ENCODE measurements at regions of chr6 and their contacts with region 1.

Region 1: GRCh38 chr6:24720604-24721460 is 1.9 kb upstream of the C6orf62 start:
- DNase-seq: peak; percentile 100
- ATAC-seq: peak; percentile 97
- H3K4me3 ChIP-seq: peak overlapping the region; percentile 85 to 92
- H3K27ac ChIP-seq: peak overlapping the region; percentile 93 to 96
- H3K4me1 ChIP-seq: no peaks in the 10 kb centered on the region
- H3K27me3 ChIP-seq: peaks cover 0 to 1% of the 10 kb centered on the region in 2 donors

Region 2: DNA sequence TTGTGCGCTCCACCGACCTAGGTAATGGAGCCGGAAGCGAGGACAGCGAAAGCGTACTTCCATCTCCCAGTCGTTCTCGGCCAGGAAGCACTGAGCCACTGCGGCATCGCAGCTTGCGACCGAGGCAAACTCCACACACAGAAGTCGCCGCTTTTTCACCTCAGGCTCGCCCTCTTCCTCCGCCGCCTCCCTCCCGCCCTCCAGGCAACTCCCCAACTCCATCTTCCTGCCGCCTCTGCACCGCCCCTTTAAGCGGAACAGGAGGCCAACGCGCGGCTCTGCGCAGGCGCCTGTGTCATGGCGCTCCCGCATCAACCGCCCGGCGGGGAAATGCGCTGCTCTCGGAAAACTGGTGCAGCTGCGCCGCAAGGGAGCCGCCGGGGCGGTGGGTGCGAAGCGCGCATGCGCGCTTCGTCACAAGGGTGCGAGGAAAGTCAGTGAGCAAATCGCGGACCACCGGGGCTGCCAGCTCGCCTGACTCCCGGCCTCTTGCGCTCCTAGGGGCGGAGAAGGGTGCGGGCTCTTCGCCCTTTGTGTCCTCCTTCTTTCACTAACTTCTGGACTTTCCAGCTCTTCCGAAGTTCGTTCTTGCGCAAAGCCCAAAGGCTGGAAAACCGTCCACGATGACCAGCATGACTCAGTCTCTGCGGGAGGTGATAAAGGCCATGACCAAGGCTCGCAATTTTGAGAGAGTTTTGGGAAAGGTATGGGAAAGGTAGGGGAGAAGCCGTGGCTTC is 54.0 kb before region 1 on chr6 and contains the starts of genes ACOT13 and TDP2:
- intact Hi-C with region 1: loop called in 1 of 2 experiments (anchors 2 kb)
- DNase-seq: peak; percentile 98
- ATAC-seq: peak; percentile 100
- H3K4me3 ChIP-seq: peak within 1 kb of the TSS; percentile 73 to 85
- H3K27ac ChIP-seq: peak within 1 kb of the TSS; percentile 52 to 69
- H3K4me1 ChIP-seq: peaks cover 0 to 4% of the 10 kb centered on the region in 2 donors
- H3K27me3 ChIP-seq: no peaks in the 10 kb centered on the region
- total RNA-seq, gene ACOT13: 8.9 to 10.4 TPM
- total RNA-seq, gene TDP2: 30.7 to 35.7 TPM

Region 3: DNA sequence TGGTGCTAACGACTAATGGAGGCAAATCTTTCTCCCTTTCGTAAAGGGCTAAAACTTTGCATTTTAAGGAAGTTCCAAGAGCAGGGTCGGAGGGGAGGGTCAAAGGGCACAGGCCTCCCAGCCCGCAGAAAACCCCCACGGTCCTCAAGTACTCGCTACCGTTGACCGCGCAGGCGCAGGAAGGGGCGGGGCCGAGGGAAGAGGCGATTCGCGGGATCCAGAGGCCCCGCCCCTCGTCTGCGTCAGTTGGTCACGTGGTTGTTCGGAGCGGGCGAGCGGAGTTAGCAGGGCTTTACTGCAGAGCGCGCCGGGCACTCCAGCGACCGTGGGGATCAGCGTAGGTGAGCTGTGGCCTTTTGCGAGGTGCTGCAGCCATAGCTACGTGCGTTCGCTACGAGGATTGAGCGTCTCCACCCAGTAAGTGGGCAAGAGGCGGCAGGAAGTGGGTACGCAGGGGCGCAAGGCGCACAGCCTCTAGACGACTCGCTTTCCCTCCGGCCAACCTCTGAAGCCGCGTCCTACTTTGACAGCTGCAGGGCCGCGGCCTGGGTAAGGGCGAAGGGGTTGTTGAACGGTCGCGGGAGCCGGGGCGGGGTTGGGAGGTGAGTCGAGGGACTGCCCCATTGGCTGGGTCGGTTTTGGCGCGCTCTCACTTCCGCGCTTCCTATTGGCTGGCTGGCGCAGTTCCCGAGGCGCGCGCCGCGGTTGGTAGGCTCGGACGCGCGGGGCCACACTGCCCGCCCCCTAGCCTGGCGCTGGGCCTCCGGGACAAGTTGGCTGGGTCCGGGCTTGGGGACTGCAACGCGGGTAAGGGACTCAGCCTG is 54.1 kb after region 1 on chr6 and contains the start of gene GMNN:
- intact Hi-C with region 1: loop called in 1 of 2 experiments (anchors 2 kb)
- DNase-seq: peak; percentile 100
- ATAC-seq: peak; percentile 99
- H3K4me3 ChIP-seq: peak within 1 kb of the TSS; percentile 67 to 82
- H3K27ac ChIP-seq: peak within 1 kb of the TSS; percentile 34 to 86
- H3K4me1 ChIP-seq: no peaks in the 10 kb centered on the region
- H3K27me3 ChIP-seq: no peaks in the 10 kb centered on the region
- total RNA-seq, gene GMNN: 5.3 to 10.2 TPM